A673 (cell line): ENCODE measurements at regions of chr5 and their contacts with region 1.

Region 1: DNA sequence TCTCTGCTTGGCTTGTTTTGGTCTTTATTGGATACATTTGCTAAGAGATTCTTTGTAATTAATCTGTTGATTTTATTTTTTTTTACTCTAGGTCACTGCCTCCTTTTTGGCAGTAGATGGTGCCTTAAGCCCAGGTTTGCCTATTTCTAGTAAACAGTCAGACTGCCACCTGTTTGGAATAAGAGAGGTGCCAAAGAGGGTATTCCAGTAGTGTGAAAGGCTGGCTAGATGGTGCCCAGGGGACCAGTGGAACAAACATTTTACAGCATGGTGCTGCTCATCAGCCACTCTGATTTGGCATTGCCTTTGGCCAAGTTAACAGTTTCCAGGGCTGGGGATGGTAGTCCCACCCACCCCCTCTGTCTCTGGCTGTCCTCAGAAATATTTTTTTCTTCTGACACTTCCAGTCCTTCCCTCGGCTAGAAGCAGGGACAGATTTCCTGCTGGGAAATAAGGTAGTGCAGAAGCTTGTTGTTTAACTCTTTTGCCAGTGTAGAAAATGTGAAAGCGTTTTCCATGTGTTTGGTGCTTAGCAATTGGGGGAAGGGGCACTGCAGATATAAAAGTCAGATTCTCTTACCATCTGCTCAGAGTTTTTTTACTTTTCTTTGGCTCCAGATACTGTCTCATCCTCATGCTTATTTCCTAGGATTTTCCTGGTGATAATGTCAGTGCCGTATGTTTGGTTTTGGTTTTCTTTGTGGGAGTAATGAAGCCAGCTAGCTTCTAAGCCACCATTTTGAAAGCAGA is 36.6 kb upstream of the FBXL7 start:
- DNase-seq: peak; percentile 4
- H3K4me3 ChIP-seq: no peak overlapping the region
- H3K27ac ChIP-seq: no peak overlapping the region
- H3K4me1 ChIP-seq: no peaks in the 10 kb centered on the region
- H3K27me3 ChIP-seq: no peaks in the 10 kb centered on the region
- CTCF ChIP-seq: 0 out of 2 replicates have a peak, but pooled peaks have one; percentile 30

Region 2: DNA sequence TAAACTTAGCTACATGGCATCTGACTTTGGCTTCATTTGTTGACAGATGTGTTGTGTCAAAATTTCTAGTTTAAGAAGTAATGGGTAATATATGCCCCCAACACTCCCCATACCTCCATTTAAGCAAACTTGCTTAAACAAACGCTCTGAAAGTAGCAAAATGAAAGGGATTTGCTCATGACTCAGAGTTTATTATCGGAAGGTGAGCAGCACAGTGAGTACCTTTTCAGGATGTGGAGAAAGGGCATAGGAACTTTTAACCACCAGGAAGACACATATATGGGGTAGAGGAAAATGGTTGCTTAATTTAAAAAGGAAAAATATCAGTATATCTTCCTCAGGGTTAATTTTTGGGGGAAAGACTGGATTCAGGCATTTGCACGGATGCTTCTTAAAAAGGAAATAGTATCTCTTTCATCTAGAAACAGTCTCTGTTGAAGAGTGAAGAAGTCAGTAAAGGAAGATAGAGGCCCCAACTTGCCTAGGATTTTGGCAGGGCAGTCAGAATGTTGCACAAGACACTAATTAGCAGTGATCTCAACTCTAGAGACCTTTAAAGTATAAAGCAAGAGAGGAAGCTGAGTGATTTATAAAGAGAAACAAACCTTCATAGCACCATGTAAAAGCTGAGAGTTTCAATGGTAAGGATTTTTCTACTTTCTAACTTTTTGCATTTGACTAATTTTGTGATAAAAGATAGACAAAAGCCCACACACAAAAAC is 1165.1 kb before region 1 on chr5:
- CTCF ChIA-PET with region 1: no interaction called
- POLR2A ChIA-PET with region 1: no interaction called
- intact Hi-C with region 1: no loop called
- DNase-seq: peak; percentile 39
- H3K4me3 ChIP-seq: no peak overlapping the region
- H3K27ac ChIP-seq: no peak overlapping the region
- H3K4me1 ChIP-seq: peaks cover 18% of the 10 kb centered on the region
- H3K27me3 ChIP-seq: no peaks in the 10 kb centered on the region
- CTCF ChIP-seq: no peak

Region 3: GRCh38 chr5:15794052-15794985 is 330.9 kb after region 1 on chr5:
- CTCF ChIA-PET with region 1: no interaction called
- POLR2A ChIA-PET with region 1: no interaction called
- intact Hi-C with region 1: loop called (anchors 5 kb)
- DNase-seq: peak; percentile 8
- H3K4me3 ChIP-seq: no peak overlapping the region
- H3K27ac ChIP-seq: no peak overlapping the region
- H3K4me1 ChIP-seq: no peaks in the 10 kb centered on the region
- H3K27me3 ChIP-seq: no peaks in the 10 kb centered on the region
- CTCF ChIP-seq: peak; percentile 38; the same call in 1 of the 2 replicates

Region 4: DNA sequence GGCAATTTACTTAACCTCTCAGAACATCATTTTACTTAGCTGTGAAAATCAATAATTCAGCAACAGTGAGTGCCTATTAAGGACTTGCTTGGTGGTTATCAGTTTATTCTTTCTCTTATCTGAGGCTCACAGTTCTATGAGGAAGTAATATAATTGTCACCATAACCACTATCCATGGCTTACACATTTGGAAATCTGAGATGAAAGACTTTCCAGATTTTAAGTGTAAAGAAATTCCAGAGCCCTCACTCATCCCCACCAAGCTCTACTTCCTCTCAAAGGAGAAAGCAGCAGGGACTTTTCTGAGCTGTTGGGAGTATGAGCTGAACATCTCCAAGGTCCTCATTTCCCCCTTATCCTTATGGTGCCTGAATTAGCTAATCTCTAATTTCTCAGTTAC is 358.1 kb after region 1 on chr5:
- CTCF ChIA-PET with region 1: interaction called, 5 read pairs
- POLR2A ChIA-PET with region 1: no interaction called
- intact Hi-C with region 1: loop called (anchors 10 kb)
- DNase-seq: no peak
- H3K4me3 ChIP-seq: no peak overlapping the region
- H3K27ac ChIP-seq: no peak overlapping the region
- H3K4me1 ChIP-seq: no peaks in the 10 kb centered on the region
- H3K27me3 ChIP-seq: no peaks in the 10 kb centered on the region
- CTCF ChIP-seq: no peak

Region 5: GRCh38 chr5:15995341-15996052 is 532.1 kb after region 1 on chr5:
- CTCF ChIA-PET with region 1: no interaction called
- POLR2A ChIA-PET with region 1: no interaction called
- intact Hi-C with region 1: loop called (anchors 1 kb)
- DNase-seq: peak; percentile 37
- H3K4me3 ChIP-seq: no peak overlapping the region
- H3K27ac ChIP-seq: no peak overlapping the region
- H3K4me1 ChIP-seq: no peaks in the 10 kb centered on the region
- H3K27me3 ChIP-seq: no peaks in the 10 kb centered on the region
- CTCF ChIP-seq: peak; percentile 54